PC-9 (cell line): ENCODE measurements at regions of chr18 and their contacts with region 1.

Region 1: DNA sequence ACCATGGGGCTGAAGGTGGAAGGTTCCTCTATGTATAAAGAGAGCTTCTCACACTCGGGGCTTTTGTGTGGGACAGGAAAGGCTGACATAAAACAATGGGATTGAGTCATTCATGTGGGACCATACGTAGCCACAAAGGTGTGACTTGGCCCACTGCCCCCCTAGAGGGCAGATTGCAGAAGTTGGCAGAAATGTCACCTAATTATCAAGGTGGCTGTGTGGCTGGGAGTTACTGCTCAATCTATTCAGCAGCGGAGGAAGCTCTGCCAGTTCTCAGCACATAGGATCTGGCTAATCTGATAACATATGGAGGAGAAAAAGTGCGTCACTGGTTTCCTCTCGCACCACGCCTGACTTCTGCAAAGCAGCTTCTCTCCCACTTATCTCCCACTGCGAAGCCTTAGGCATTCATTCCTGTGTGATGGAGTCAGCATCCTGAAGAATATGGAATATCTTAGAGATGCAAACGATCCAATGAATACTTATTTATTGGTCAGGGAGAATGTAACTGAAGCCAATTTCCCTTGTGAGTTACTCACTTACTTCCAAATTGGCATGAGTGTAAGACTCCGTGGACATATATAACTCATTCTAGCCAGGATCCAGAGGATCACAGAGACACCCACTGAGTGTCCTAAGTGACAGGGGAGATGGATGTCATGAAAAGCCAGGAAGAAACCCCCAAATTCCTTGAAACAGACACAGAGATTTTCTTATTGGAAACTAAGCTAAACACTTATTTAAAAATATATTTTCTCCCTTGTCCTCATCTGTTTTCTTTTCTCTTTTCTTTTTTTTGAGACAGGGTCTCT is 344.8 kb downstream of the TGIF1 start:
- DNase-seq: peak; percentile 87 to 88
- H3K4me3 ChIP-seq: peak overlapping the region; percentile 20; the same call in 1 of the 2 replicates
- H3K27ac ChIP-seq: peak overlapping the region; percentile 93
- H3K4me1 ChIP-seq: peaks cover 26% of the 10 kb centered on the region
- H3K27me3 ChIP-seq: no peaks in the 10 kb centered on the region
- CTCF ChIP-seq: no peak; the same call in 1 of the 2 replicates

Region 2: GRCh38 chr18:3816610-3817363 is 22.0 kb after region 1 on chr18:
- CTCF ChIA-PET with region 1: no interaction called
- POLR2A ChIA-PET with region 1: no interaction called
- intact Hi-C with region 1: loop called (anchors 2 kb)
- DNase-seq: peak in 1 of 2 experiments; percentile 77
- H3K4me3 ChIP-seq: no peak overlapping the region
- H3K27ac ChIP-seq: peak overlapping the region; percentile 69
- H3K4me1 ChIP-seq: peaks cover 17% of the 10 kb centered on the region
- H3K27me3 ChIP-seq: no peaks in the 10 kb centered on the region
- CTCF ChIP-seq: no peak

Region 3: DNA sequence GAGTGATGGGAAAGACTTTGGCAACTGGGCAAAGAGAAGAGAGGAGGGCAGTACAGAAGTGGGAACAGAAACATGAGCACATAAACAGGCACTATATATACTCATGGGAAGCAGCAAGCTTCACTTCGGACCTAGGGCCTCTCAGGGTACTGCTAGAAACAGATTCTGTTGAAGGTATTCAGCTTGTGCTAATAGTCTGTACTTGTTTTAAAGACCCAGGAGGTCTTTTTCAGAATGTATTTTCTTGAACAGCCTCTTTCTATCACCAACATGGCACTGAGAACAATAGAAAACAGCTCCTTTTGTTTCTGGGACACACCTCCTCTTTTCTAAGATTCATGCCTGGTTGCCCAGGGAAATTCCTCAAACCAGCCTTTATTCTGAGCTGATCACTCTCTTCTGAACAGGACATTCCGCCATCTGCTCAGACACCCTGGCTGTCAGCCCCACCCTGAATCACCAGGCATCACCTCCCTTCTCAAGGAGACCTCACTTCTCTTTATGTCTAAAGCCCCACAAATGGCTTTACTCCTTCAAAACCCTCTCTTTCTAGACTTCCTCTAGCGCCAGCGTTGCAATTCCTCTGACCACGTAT is 44.8 kb after region 1 on chr18:
- CTCF ChIA-PET with region 1: no interaction called
- POLR2A ChIA-PET with region 1: no interaction called
- intact Hi-C with region 1: no loop called
- DNase-seq: no peak
- H3K4me3 ChIP-seq: no peak overlapping the region
- H3K27ac ChIP-seq: no peak overlapping the region
- H3K4me1 ChIP-seq: no peaks in the 10 kb centered on the region
- H3K27me3 ChIP-seq: no peaks in the 10 kb centered on the region
- CTCF ChIP-seq: no peak